ENCODE measurements at regions of chr4 and their contacts with region 1.

Region 1: DNA sequence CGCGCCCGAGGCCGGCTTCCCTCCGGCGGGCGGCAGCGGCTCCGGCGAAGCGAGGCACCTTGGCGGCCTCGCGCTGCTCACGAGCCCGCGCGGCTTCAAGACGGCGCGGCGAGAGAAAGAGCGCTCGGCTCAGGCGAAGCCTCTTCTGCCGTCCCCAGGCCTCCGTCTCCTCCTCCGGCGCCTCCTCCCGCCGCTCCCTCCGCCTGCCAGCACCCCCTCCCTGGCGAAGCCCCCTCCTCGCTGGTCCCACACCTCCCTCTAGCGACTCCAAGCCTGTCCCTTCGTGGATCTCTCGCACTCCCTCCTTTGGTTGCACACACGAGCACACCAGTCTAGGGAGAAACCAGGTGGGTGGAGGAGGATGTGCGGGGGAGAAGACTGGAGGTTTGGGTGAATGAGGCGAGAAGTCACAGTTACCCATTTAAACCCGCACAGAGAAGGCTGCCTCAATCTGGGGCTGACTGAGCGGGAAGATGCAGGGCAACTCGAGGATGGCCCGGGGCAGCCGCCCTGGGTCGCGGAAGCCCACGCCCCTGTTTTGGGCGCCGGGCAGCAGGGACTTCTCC is at the start of gene CAMK2D:
- DNase-seq: peak; percentile 66 to 91 (median 87)
- ATAC-seq: peak; percentile 71
- H3K4me3 ChIP-seq: peak within 1 kb of the TSS; percentile 97
- H3K4me3 Mint-ChIP-seq: peak within 1 kb of the TSS; percentile 92 to 100 (median 96)
- H3K27ac ChIP-seq: peak within 1 kb of the TSS; percentile 93
- H3K27ac Mint-ChIP-seq: peak within 1 kb of the TSS; percentile 96 to 100 (median 98)
- H3K4me1 ChIP-seq: peaks cover 5 to 18% of the 10 kb centered on the region in 2 donors
- H3K4me1 Mint-ChIP-seq: peaks cover 15 to 51% (median 43%) of the 10 kb centered on the region in 7 donors
- H3K27me3 ChIP-seq: no peaks in the 10 kb centered on the region
- H3K27me3 Mint-ChIP-seq: peaks cover 0 to 3% (median 0%) of the 10 kb centered on the region in 5 donors
- total RNA-seq, gene CAMK2D: 35.8 to 41.2 (median 40.0) TPM

Region 2: GRCh38 chr4:112145326-112145819 is 1616.3 kb before region 1 on chr4 and contains the start of gene FAM241A:
- CTCF ChIA-PET with region 1: no interaction called
- POLR2A ChIA-PET with region 1: no interaction called
- intact Hi-C with region 1: loop called in 1 of 2 experiments (anchors 2 kb)
- DNase-seq: peak; percentile 81 to 92 (median 88)
- ATAC-seq: peak; percentile 98
- H3K4me3 ChIP-seq: peak within 1 kb of the TSS; percentile 89
- H3K4me3 Mint-ChIP-seq: peak within 1 kb of the TSS; percentile 90 to 99 (median 94)
- H3K27ac ChIP-seq: peak within 1 kb of the TSS; percentile 78
- H3K27ac Mint-ChIP-seq: peak within 1 kb of the TSS; percentile 75 to 98 (median 95)
- H3K4me1 ChIP-seq: peaks cover 0 to 12% of the 10 kb centered on the region in 2 donors
- H3K4me1 Mint-ChIP-seq: peaks cover 16 to 44% (median 40%) of the 10 kb centered on the region in 7 donors
- H3K27me3 ChIP-seq: no peaks in the 10 kb centered on the region
- H3K27me3 Mint-ChIP-seq: peaks cover 0 to 5% (median 0%) of the 10 kb centered on the region in 5 donors
- total RNA-seq, gene FAM241A: 1.2 to 2.4 (median 2.0) TPM

Region 3: DNA sequence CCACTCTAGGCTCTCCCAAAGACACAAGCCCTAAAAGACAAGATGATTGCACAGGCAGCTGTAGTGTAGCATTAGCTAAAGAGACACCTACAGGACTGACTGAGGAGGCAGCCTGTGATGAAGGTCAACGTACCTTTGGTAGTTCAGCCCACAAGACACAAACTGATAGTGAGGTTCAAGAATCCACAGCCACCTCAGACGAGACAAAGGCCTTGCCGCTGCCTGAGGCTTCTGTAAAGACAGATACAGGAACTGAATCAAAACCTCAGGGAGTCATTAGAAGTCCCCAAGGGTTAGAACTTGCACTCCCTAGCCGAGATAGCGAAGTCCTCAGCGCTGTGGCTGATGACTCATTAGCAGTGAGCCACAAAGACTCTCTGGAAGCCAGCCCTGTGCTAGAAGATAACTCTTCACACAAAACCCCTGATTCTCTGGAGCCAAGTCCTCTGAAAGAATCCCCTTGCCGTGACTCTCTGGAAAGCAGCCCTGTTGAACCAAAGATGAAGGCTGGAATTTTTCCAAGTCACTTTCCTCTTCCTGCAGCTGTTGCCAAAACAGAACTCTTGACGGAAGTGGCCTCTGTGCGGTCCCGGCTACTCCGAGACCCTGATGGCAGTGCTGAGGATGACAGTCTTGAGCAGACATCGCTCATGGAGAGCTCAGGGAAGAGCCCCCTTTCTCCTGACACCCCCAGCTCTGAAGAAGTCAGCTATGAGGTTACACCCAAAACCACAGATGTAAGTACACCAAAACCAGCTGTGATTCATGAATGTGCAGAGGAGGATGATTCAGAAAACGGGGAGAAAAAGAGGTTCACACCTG is 405.9 kb before region 1 on chr4:
- CTCF ChIA-PET with region 1: no interaction called
- POLR2A ChIA-PET with region 1: no interaction called
- intact Hi-C with region 1: loop called in 1 of 2 experiments (anchors 1 kb)
- DNase-seq: peak in 8 of 9 donors; percentile 0 to 64 (median 17)
- ATAC-seq: peak; percentile 91
- H3K4me3 ChIP-seq: peak overlapping the region; percentile 34
- H3K4me3 Mint-ChIP-seq: peak overlapping the region; percentile 58 to 82 (median 71)
- H3K27ac ChIP-seq: no peak overlapping the region
- H3K27ac Mint-ChIP-seq: peak overlapping the region in 6 of 9 donors; percentile 14 to 90 (median 66)
- H3K4me1 ChIP-seq: peaks cover 7 to 13% of the 10 kb centered on the region in 2 donors
- H3K4me1 Mint-ChIP-seq: peaks cover 10 to 36% (median 20%) of the 10 kb centered on the region in 7 donors
- H3K27me3 ChIP-seq: no peaks in the 10 kb centered on the region
- H3K27me3 Mint-ChIP-seq: peaks cover 6 to 55% (median 18%) of the 10 kb centered on the region in 5 donors

Region 4: DNA sequence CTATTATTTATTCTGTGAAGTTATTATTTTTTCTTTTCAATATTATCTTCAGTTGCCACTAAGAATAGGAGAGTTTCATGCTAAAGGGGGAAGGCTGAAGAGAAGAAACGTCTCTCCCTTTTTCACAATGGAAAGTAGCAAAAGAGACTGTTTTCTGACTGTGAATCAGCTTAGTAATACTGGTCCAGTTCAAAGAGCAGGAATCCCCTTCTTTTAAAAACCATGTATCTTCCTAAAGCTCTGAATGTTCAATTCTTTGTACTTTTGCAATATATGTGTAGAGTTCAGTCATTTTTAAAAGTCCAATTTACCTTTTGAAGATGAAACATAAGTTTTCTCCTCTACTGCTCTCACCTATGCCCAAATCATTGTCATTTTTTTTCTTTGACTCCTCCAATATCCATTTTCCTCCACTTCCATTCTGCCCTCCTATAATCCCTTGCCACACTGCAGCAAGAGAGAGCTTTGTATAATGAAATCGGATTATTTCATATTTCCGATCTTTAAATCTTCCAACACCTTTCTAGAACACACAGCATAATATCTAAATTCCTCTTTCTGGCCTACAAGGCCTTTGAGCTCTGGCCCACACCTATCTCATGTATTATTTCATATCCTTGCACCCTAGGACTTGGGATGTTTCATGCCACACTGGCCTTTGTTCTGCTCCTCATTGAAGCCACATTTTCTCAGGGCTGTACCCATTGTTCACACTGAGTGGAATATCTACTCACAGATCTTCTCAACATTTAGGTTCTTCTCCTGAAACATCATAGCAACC is 195.5 kb before region 1 on chr4:
- CTCF ChIA-PET with region 1: no interaction called
- POLR2A ChIA-PET with region 1: no interaction called
- intact Hi-C with region 1: loop called (anchors 1 to 5 kb)
- DNase-seq: no peak
- ATAC-seq: no peak
- H3K4me3 ChIP-seq: no peak overlapping the region
- H3K4me3 Mint-ChIP-seq: peak overlapping the region in 6 of 10 donors; percentile 3 to 31 (median 14)
- H3K27ac ChIP-seq: no peak overlapping the region
- H3K27ac Mint-ChIP-seq: peak overlapping the region in 6 of 9 donors; percentile 1 to 49 (median 15)
- H3K4me1 ChIP-seq: peaks cover 18 to 22% of the 10 kb centered on the region in 2 donors
- H3K4me1 Mint-ChIP-seq: peaks cover 29 to 66% (median 49%) of the 10 kb centered on the region in 7 donors
- H3K27me3 ChIP-seq: no peaks in the 10 kb centered on the region
- H3K27me3 Mint-ChIP-seq: no peaks in the 10 kb centered on the region

Region 5: DNA sequence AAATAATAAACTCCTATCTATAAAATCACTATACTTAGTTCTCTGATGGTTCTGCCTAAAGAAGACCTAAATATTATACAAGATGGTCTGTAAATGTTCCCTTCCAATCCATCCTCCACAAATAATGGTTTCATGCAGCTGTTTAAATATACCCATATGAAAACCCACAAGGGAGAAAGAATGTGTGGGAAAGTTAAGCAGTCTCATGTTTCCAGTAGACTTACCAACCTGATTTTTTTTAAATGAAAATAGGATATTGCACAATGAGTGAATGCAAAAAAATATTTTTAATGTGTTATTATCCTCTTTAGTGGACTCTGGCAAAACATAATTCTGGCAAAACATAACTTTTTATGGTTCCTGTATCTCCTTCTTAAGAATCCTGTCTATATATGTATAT is 23.5 kb before region 1 on chr4:
- CTCF ChIA-PET with region 1: interaction called, 4 read pairs
- POLR2A ChIA-PET with region 1: interaction called, 3 read pairs
- intact Hi-C with region 1: loop called (anchors 2 kb)
- DNase-seq: no peak
- ATAC-seq: no peak
- H3K4me3 ChIP-seq: no peak overlapping the region
- H3K4me3 Mint-ChIP-seq: no peak overlapping the region
- H3K27ac ChIP-seq: no peak overlapping the region
- H3K27ac Mint-ChIP-seq: no peak overlapping the region
- H3K4me1 ChIP-seq: peaks cover 0 to 13% of the 10 kb centered on the region in 2 donors
- H3K4me1 Mint-ChIP-seq: peaks cover 21 to 80% (median 53%) of the 10 kb centered on the region in 7 donors
- H3K27me3 ChIP-seq: no peaks in the 10 kb centered on the region
- H3K27me3 Mint-ChIP-seq: no peaks in the 10 kb centered on the region

Region 6: GRCh38 chr4:113908829-113909228 is 147.1 kb after region 1 on chr4:
- CTCF ChIA-PET with region 1: no interaction called
- POLR2A ChIA-PET with region 1: interaction called, 5 read pairs
- intact Hi-C with region 1: loop called (anchors 1 to 2 kb)
- DNase-seq: peak in 5 of 9 donors; percentile 10 to 31 (median 26)
- ATAC-seq: no peak
- H3K4me3 ChIP-seq: no peak overlapping the region
- H3K4me3 Mint-ChIP-seq: no peak overlapping the region
- H3K27ac ChIP-seq: no peak overlapping the region
- H3K27ac Mint-ChIP-seq: peak overlapping the region in 2 of 9 donors; percentile 2 to 7
- H3K4me1 ChIP-seq: peaks cover 12 to 24% of the 10 kb centered on the region in 2 donors
- H3K4me1 Mint-ChIP-seq: peaks cover 6 to 57% (median 46%) of the 10 kb centered on the region in 7 donors
- H3K27me3 ChIP-seq: no peaks in the 10 kb centered on the region
- H3K27me3 Mint-ChIP-seq: no peaks in the 10 kb centered on the region

Region 7: DNA sequence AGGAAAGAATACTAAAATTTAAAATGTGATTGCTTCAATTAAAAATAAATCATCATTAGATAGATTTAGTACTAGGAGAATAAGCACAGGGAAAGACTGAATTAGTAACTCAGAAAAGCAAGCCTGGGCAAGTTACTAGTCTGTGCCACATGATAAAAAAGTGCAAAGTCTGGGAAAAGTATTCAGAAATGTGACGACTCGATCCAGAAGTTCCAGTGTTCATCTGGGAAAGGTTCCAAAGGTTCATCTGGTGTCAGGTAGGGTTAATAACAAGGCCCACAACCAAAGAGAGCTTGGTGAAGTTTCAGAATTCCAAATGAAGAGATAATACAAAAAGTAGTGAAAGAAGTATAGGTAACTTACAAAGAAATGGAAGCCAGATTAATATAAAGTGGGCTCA is 296.0 kb after region 1 on chr4:
- CTCF ChIA-PET with region 1: no interaction called
- POLR2A ChIA-PET with region 1: no interaction called
- intact Hi-C with region 1: no loop called
- DNase-seq: no peak
- ATAC-seq: no peak
- H3K4me3 ChIP-seq: no peak overlapping the region
- H3K4me3 Mint-ChIP-seq: no peak overlapping the region
- H3K27ac ChIP-seq: no peak overlapping the region
- H3K27ac Mint-ChIP-seq: no peak overlapping the region
- H3K4me1 ChIP-seq: no peaks in the 10 kb centered on the region
- H3K4me1 Mint-ChIP-seq: peaks cover 0 to 5% (median 0%) of the 10 kb centered on the region in 7 donors
- H3K27me3 ChIP-seq: no peaks in the 10 kb centered on the region
- H3K27me3 Mint-ChIP-seq: peaks cover 0 to 3% (median 0%) of the 10 kb centered on the region in 5 donors

Measured in naive thymus-derived CD4-positive, alpha-beta T cell (primary cell).